Endothelial cell of umbilical vein (primary cell): ENCODE measurements at regions of chr6 and their contacts with region 1.

Region 1: GRCh38 chr6:53484476-53485280 is 60.2 kb downstream of the GCLC start:
- DNase-seq: peak; percentile 84
- H3K4me3 ChIP-seq: no peak overlapping the region
- H3K27ac ChIP-seq: no peak overlapping the region
- H3K4me1 ChIP-seq: no peaks in the 10 kb centered on the region
- H3K27me3 ChIP-seq: peaks cover 10 to 25% of the 10 kb centered on the region in 2 experiments
- CTCF ChIP-seq: peak; percentile 73 to 75
- POLR2A ChIP-seq: no peak

Region 2: DNA sequence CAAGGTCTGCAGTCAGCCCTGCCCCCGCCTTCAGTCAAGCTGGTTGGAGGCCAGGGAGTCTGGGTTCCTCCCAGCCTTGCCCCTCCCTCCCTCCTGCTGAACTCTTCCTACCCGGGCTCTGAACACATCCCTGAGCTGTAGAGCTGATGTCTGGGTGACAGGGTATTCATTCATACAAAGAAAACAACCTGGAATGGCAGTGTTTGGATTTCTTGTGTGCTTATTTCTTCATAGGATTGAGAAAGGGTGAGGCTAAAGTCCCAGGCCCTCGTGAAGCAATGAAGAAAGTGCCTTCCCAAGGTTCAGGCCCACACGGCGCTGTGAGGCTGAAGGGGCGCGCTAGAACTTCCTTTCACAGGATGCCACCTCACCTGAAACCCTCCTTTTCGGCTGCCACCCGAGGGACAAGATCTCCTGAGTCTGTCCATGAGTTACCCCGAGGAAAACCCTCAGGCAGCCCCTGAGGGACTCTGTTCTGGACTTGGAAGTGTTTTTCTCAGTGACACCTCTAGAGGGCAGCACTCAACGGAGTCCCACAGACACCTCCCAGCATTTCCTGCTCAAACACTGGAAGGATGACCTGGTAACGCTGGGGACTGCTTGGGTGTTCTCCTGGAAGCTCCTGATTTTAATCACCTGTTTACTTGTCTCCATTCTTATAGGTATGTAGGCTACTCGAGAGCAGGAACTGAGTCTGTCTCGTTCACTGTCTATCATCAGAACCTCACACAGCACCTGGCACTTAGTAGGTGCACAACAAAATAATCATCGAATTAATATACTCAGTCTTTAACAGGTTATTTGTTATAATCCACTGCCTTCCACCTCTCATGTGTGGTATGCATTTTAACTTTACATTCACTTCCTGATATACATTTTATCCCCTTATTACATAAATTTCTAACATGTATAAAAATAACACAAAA is 669.2 kb before region 1 on chr6:
- CTCF ChIA-PET with region 1: no interaction called
- POLR2A ChIA-PET with region 1: no interaction called
- dilution Hi-C with region 1: no loop called
- intact Hi-C with region 1: loop called (anchors 1 kb)
- DNase-seq: peak; percentile 14
- H3K4me3 ChIP-seq: no peak overlapping the region
- H3K27ac ChIP-seq: no peak overlapping the region
- H3K4me1 ChIP-seq: no peaks in the 10 kb centered on the region
- H3K27me3 ChIP-seq: peaks cover 0 to 8% of the 10 kb centered on the region in 2 experiments
- CTCF ChIP-seq: peak; percentile 54 to 66
- POLR2A ChIP-seq: no peak

Region 3: DNA sequence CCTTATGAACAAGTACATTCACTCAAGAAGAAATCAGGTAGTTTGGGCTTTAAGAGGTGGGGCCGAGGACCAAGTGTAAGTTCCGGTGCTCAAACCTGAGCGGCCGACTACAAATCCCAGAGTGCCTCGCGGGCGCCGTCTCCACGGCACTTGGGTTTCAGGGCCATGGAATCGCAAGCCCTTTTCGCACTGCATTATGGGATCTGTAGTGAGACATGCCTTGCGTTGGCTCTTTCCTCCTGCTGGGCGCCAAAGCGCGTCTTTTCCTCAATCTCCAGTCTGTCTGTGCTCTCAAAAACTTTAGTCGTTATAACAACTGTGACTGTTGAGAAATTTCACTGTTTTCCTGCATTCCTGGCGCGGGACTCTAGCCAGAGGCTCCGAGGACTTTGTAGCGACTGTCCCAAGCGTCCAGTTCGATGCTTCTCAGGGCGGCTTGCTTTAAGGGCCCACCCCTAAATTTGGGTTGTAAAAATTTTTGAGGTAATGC is 419.9 kb before region 1 on chr6:
- CTCF ChIA-PET with region 1: interaction called, 10 read pairs
- POLR2A ChIA-PET with region 1: no interaction called
- dilution Hi-C with region 1: no loop called
- intact Hi-C with region 1: no loop called
- DNase-seq: peak; percentile 98
- H3K4me3 ChIP-seq: peak overlapping the region; percentile 83 to 87 (median 87)
- H3K27ac ChIP-seq: peak overlapping the region; percentile 53
- H3K4me1 ChIP-seq: peaks cover 16% of the 10 kb centered on the region
- H3K27me3 ChIP-seq: no peaks in the 10 kb centered on the region
- CTCF ChIP-seq: no peak
- POLR2A ChIP-seq: peak; percentile 46

Region 4: GRCh38 chr6:53171605-53172446 is 312.9 kb before region 1 on chr6:
- CTCF ChIA-PET with region 1: interaction called, 121 read pairs
- POLR2A ChIA-PET with region 1: interaction called, 10 read pairs
- dilution Hi-C with region 1: no loop called
- intact Hi-C with region 1: loop called (anchors 1 kb)
- DNase-seq: peak; percentile 80
- H3K4me3 ChIP-seq: no peak overlapping the region
- H3K27ac ChIP-seq: no peak overlapping the region
- H3K4me1 ChIP-seq: no peaks in the 10 kb centered on the region
- H3K27me3 ChIP-seq: peaks cover 3 to 4% of the 10 kb centered on the region in 2 experiments
- CTCF ChIP-seq: peak; percentile 100
- POLR2A ChIP-seq: no peak

Region 5: GRCh38 chr6:53437557-53438202 is 47.0 kb before region 1 on chr6:
- CTCF ChIA-PET with region 1: interaction called, 5 read pairs
- POLR2A ChIA-PET with region 1: no interaction called
- dilution Hi-C with region 1: no loop called
- intact Hi-C with region 1: loop called (anchors 1 kb)
- DNase-seq: peak; percentile 64
- H3K4me3 ChIP-seq: no peak overlapping the region
- H3K27ac ChIP-seq: no peak overlapping the region
- H3K4me1 ChIP-seq: no peaks in the 10 kb centered on the region
- H3K27me3 ChIP-seq: peaks cover 3 to 4% of the 10 kb centered on the region in 2 experiments
- CTCF ChIP-seq: peak; percentile 59 to 68
- POLR2A ChIP-seq: no peak

Region 6: GRCh38 chr6:53504512-53504911 is 19.8 kb after region 1 on chr6:
- CTCF ChIA-PET with region 1: no interaction called
- POLR2A ChIA-PET with region 1: no interaction called
- dilution Hi-C with region 1: no loop called
- intact Hi-C with region 1: no loop called
- DNase-seq: no peak
- H3K4me3 ChIP-seq: no peak overlapping the region
- H3K27ac ChIP-seq: no peak overlapping the region
- H3K4me1 ChIP-seq: no peaks in the 10 kb centered on the region
- H3K27me3 ChIP-seq: no peaks in the 10 kb centered on the region
- CTCF ChIP-seq: no peak
- POLR2A ChIP-seq: no peak

Region 7: DNA sequence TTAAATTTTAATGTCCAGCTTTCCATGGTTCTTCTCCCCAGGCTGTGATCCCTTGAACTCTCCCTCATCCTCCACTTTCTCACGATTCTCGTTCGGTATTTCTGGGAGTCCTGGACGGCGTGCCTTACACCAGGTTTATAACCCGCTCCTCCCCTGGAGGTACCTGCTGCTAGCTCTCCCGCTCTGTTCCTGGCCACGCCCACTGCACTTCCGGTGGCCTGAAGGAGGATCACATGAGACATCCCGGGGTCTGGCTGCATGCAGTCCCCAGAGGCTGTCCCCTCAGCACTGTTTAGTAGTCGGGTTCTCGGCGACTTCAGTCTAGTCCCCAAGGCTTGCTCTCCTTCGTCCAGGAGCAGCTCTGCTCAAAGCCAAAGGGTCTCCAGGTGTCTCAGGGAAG is 88.6 kb after region 1 on chr6:
- CTCF ChIA-PET with region 1: no interaction called
- POLR2A ChIA-PET with region 1: no interaction called
- dilution Hi-C with region 1: no loop called
- intact Hi-C with region 1: no loop called
- DNase-seq: no peak
- H3K4me3 ChIP-seq: no peak overlapping the region
- H3K27ac ChIP-seq: no peak overlapping the region
- H3K4me1 ChIP-seq: no peaks in the 10 kb centered on the region
- H3K27me3 ChIP-seq: no peaks in the 10 kb centered on the region
- CTCF ChIP-seq: no peak
- POLR2A ChIP-seq: no peak